Spleen (tissue), 13 donors: ENCODE measurements at regions of chr20 and their contacts with region 1.

Region 1: GRCh38 chr20:21719592-21720214 is 14.2 kb downstream of the PAX1 start:
- DNase-seq: no peak
- H3K4me3 ChIP-seq: no peak overlapping the region
- H3K27ac ChIP-seq: no peak overlapping the region
- H3K4me1 ChIP-seq: no peaks in the 10 kb centered on the region
- H3K27me3 ChIP-seq: peaks cover 0 to 46% (median 23%) of the 10 kb centered on the region in 7 donors
- CTCF ChIP-seq: peak in 10 of 11 experiments; percentile 13 to 73 (median 57)
- POLR2A ChIP-seq: no peak

Region 2: DNA sequence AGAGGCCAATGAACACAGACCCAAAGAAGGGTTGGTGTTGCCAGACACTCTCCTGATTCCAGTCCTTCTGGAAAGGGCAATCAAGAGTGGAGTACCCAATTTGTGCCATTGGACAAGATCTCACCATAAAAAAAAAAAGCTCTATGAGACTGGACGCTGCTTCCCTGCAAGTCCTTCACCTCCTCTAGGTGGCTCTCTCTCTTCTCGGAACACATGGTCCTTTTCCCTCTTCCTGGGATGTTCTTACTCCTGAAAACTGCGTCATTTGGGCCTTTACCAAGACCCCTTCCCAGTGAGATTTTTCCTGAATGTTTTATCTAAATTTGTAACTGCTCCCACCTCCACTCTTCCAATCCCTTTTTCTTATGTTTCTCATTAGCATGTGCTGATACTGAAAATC is 583.8 kb after region 1 on chr20:
- intact Hi-C with region 1: loop called (anchors 10 kb)
- DNase-seq: no peak
- H3K4me3 ChIP-seq: no peak overlapping the region
- H3K27ac ChIP-seq: no peak overlapping the region
- H3K4me1 ChIP-seq: no peaks in the 10 kb centered on the region
- H3K27me3 ChIP-seq: peaks cover 0 to 12% (median 0%) of the 10 kb centered on the region in 7 donors
- CTCF ChIP-seq: no peak
- POLR2A ChIP-seq: no peak